ENCODE measurements at regions of chr7 and their contacts with region 1.

Region 1: GRCh38 chr7:135170274-135170997 is at the start of gene CYREN:
- DNase-seq: peak; percentile 85
- ATAC-seq: peak; percentile 76
- H3K4me3 Mint-ChIP-seq: peak within 1 kb of the TSS; percentile 92
- H3K27ac Mint-ChIP-seq: peak within 1 kb of the TSS; percentile 95
- H3K4me1 Mint-ChIP-seq: peaks cover 59% of the 10 kb centered on the region
- H3K27me3 Mint-ChIP-seq: no peaks in the 10 kb centered on the region
- CTCF ChIP-seq: no peak
- total RNA-seq, gene CYREN: 78.2 and 79.3 TPM in 2 replicates

Region 2: GRCh38 chr7:134766779-134767519 is 403.5 kb before region 1 on chr7:
- CTCF ChIA-PET with region 1: interaction called, 3 read pairs
- POLR2A ChIA-PET with region 1: interaction called, 12 read pairs
- intact Hi-C with region 1: loop called (anchors 2 kb)
- DNase-seq: peak; percentile 27
- ATAC-seq: peak; percentile 90
- H3K4me3 Mint-ChIP-seq: peak overlapping the region; percentile 55
- H3K27ac Mint-ChIP-seq: peak overlapping the region; percentile 89
- H3K4me1 Mint-ChIP-seq: peaks cover 33% of the 10 kb centered on the region
- H3K27me3 Mint-ChIP-seq: no peaks in the 10 kb centered on the region
- CTCF ChIP-seq: no peak

Region 3: GRCh38 chr7:134992626-134993179 is 177.7 kb before region 1 on chr7:
- CTCF ChIA-PET with region 1: interaction called, 5 read pairs
- POLR2A ChIA-PET with region 1: interaction called, 68 read pairs
- intact Hi-C with region 1: loop called (anchors 1 kb)
- DNase-seq: no peak
- ATAC-seq: peak; percentile 95
- H3K4me3 Mint-ChIP-seq: peak overlapping the region; percentile 36
- H3K27ac Mint-ChIP-seq: peak overlapping the region; percentile 78
- H3K4me1 Mint-ChIP-seq: peaks cover 27% of the 10 kb centered on the region
- H3K27me3 Mint-ChIP-seq: no peaks in the 10 kb centered on the region
- CTCF ChIP-seq: no peak

Region 4: GRCh38 chr7:135083005-135083404 is 87.4 kb before region 1 on chr7:
- CTCF ChIA-PET with region 1: no interaction called
- POLR2A ChIA-PET with region 1: no interaction called
- intact Hi-C with region 1: no loop called
- DNase-seq: no peak
- ATAC-seq: no peak
- H3K4me3 Mint-ChIP-seq: no peak overlapping the region
- H3K27ac Mint-ChIP-seq: no peak overlapping the region
- H3K4me1 Mint-ChIP-seq: no peaks in the 10 kb centered on the region
- H3K27me3 Mint-ChIP-seq: no peaks in the 10 kb centered on the region
- CTCF ChIP-seq: no peak

Region 5: DNA sequence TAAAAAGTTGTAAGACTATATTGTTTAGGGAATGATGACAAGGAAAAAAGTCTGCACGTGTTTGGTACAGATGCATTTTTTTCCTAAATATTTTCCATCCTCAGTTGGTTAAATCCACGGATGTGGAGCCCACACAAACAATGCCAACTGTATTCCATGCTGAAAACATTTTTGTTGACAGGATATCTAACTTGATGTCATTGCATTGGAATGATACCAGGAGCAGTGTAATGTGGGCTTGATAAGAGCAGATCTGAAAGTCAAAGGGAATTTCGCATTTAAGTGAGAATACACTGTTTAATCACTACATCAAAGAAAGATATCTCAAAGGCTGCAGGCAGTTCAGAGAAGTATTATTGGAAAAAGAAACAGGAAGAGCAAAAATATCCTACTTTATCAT is 72.0 kb before region 1 on chr7:
- CTCF ChIA-PET with region 1: no interaction called
- POLR2A ChIA-PET with region 1: no interaction called
- intact Hi-C with region 1: no loop called
- DNase-seq: no peak
- ATAC-seq: no peak
- H3K4me3 Mint-ChIP-seq: no peak overlapping the region
- H3K27ac Mint-ChIP-seq: no peak overlapping the region
- H3K4me1 Mint-ChIP-seq: peaks cover 17% of the 10 kb centered on the region
- H3K27me3 Mint-ChIP-seq: no peaks in the 10 kb centered on the region
- CTCF ChIP-seq: no peak

Region 6: DNA sequence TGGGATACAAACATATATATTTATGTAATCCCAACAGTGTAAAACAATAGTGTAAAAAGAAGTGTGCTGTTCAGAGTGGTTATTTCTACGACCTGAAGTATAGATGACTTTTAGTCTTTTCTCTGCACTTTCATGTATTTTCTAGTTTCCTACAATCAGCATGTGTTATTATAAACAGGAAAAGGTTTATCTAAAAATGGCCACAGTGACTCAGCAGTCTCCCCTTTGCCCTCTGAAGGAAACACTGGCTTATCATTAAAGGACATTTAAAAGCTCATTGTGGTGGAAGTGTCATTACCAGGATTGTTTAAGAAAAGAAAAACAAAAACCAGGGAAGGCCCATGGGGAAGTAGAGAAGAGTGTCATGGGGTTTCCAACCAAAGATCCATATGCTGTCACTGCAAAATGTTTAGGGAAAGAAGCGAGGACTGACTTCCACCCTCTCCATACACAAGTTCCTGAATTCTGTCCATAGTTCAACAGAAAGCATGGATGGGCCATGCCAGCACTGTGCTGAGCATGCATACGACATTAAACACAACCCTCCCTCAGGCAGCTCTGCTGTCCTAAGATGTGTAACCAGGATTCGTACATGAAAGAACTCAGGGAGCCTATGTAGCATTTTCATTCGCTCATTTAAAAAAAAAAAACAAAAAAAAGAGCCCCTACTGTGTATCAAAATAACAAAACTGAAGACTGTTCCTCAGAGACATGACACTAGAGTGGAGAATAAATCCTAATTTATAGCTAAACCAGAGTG is 10.2 kb before region 1 on chr7:
- CTCF ChIA-PET with region 1: interaction called, 36 read pairs
- POLR2A ChIA-PET with region 1: interaction called, 90 read pairs
- intact Hi-C with region 1: loop called (anchors 1 kb)
- DNase-seq: no peak
- ATAC-seq: peak; percentile 20
- H3K4me3 Mint-ChIP-seq: peak overlapping the region; percentile 65
- H3K27ac Mint-ChIP-seq: peak overlapping the region; percentile 93
- H3K4me1 Mint-ChIP-seq: peaks cover 50% of the 10 kb centered on the region
- H3K27me3 Mint-ChIP-seq: no peaks in the 10 kb centered on the region
- CTCF ChIP-seq: no peak

Region 7: GRCh38 chr7:135211179-135211945 is 40.9 kb after region 1 on chr7 and contains the start of gene WDR91:
- CTCF ChIA-PET with region 1: interaction called, 3 read pairs
- POLR2A ChIA-PET with region 1: interaction called, 46 read pairs
- intact Hi-C with region 1: loop called (anchors 1 kb)
- DNase-seq: peak; percentile 87
- ATAC-seq: peak; percentile 92
- H3K4me3 Mint-ChIP-seq: peak within 1 kb of the TSS; percentile 97
- H3K27ac Mint-ChIP-seq: peak within 1 kb of the TSS; percentile 97
- H3K4me1 Mint-ChIP-seq: peaks cover 40% of the 10 kb centered on the region
- H3K27me3 Mint-ChIP-seq: no peaks in the 10 kb centered on the region
- CTCF ChIP-seq: no peak
- total RNA-seq, gene WDR91: 59.5 and 60.1 TPM in 2 replicates

Region 8: DNA sequence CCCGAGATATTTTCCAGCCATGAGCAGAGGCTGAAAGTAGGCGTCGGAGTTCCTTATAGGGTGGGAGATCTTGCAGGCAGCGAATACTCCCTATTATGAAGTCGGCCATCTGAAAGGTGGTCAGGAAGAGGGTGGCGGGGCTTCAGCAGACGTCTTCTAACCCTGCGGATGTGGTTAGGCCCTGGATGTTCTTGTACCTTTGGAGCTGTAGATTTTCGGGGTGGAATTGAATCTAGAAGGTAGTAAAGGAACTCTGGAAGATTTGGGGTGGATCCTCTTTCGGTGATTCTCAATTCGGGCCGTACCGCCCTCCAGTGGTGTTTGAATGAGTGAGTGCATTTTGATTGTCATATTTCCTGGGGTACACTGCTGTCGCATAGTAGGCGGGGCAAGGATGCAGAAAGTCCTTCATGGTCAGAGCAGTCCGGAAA is 387.9 kb after region 1 on chr7:
- CTCF ChIA-PET with region 1: no interaction called
- POLR2A ChIA-PET with region 1: no interaction called
- intact Hi-C with region 1: loop called (anchors 5 kb)
- DNase-seq: peak; percentile 46
- ATAC-seq: peak; percentile 56
- H3K4me3 Mint-ChIP-seq: no peak overlapping the region
- H3K27ac Mint-ChIP-seq: no peak overlapping the region
- H3K4me1 Mint-ChIP-seq: peaks cover 16% of the 10 kb centered on the region
- H3K27me3 Mint-ChIP-seq: no peaks in the 10 kb centered on the region
- CTCF ChIP-seq: peak; percentile 29

Region 9: GRCh38 chr7:135877805-135878204 is 707.4 kb after region 1 on chr7:
- CTCF ChIA-PET with region 1: no interaction called
- POLR2A ChIA-PET with region 1: no interaction called
- intact Hi-C with region 1: no loop called
- DNase-seq: no peak
- ATAC-seq: no peak
- H3K4me3 Mint-ChIP-seq: no peak overlapping the region
- H3K27ac Mint-ChIP-seq: no peak overlapping the region
- H3K4me1 Mint-ChIP-seq: no peaks in the 10 kb centered on the region
- H3K27me3 Mint-ChIP-seq: peaks cover 17% of the 10 kb centered on the region
- CTCF ChIP-seq: no peak